ENCODE measurements at regions of chr9 and their contacts with region 1.

Region 1: DNA sequence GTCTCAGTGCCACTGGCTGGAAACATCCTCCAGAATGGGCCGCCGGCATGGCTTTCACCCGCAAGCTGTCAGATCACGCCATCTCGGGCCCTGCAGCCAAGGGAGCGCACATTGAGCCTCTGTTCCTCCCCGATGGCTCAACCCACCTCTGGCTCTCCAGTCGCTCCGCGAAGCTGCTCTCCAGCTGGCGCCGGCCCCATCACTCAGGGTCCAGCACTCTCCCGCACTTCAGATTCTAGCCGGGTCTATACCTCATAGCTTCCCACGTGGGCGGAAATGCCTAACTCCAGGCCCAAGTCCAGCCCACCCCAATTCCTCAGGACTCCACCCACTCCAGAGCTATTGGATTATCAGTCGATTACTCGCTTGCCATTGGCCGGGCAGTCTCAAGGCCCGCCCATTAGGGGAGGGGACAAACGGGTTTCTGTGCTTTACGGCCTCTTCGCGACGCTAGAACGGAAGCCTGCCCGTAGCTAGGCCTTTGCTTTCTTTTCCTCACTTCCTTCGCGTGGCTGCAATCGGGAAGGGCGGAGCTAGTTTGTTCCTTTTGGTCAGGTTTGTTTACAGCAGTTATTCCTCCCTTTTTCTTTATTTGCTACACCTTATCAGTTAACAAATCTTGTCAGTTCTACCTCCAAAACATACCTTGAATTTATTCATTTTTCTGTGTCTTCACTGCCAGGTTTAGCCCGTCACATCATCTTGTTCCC is at the start of gene NOL6:
- DNase-seq: peak; percentile 94
- H3K4me3 ChIP-seq: peak within 1 kb of the TSS; percentile 93
- CTCF ChIP-seq: no peak

Region 2: GRCh38 chr9:33446946-33447798 is 26.6 kb before region 1 on chr9 and contains the start of gene AQP3:
- CTCF ChIA-PET with region 1: interaction called, 284 read pairs
- POLR2A ChIA-PET with region 1: interaction called, 6 read pairs
- DNase-seq: no peak
- H3K4me3 ChIP-seq: peak within 1 kb of the TSS; percentile 52
- CTCF ChIP-seq: peak; percentile 45

Region 3: DNA sequence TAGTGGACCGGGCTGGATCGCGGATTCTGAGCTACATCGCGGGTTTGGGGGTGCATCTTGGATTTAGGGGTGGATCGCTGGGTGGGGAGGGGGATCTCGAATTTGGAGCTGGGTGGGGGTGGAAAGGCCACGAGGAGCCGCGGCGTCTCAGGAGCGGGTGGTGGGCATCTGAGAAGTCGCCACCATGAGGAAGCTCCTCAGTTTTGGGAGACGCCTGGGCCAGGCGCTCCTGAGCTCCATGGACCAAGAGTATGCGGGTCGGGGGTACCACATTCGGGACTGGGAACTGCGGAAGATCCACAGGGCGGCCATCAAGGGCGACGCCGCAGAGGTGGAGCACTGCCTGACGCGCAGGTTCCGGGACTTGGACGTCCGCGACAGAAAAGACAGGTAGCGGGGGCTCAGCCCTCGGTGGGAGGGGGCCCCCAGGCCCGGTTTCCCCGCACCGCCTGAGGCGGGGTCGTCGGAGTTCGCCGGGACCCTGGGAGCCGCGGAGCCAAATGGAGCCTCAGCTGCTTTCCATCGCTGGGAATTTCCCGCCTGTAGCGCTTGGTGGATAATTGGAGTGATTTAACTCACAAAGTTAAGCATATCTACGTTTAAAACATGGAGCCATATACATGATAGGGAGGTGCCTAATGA is 50.6 kb after region 1 on chr9:
- CTCF ChIA-PET with region 1: no interaction called
- POLR2A ChIA-PET with region 1: interaction called, 10 read pairs
- DNase-seq: no peak
- H3K4me3 ChIP-seq: peak overlapping the region; percentile 64
- CTCF ChIP-seq: no peak